ENCODE measurements at regions of chr14 and their contacts with region 1.

Region 1: GRCh38 chr14:100645192-100645990 is 58.2 kb upstream of the BEGAIN start:
- DNase-seq: peak; percentile 93
- H3K4me3 ChIP-seq: no peak overlapping the region
- H3K27ac ChIP-seq: no peak overlapping the region
- H3K4me1 ChIP-seq: no peaks in the 10 kb centered on the region
- H3K27me3 ChIP-seq: no peaks in the 10 kb centered on the region
- CTCF ChIP-seq: peak; percentile 85

Region 2: GRCh38 chr14:100140452-100141078 is 504.8 kb before region 1 on chr14:
- CTCF ChIA-PET with region 1: no interaction called
- POLR2A ChIA-PET with region 1: no interaction called
- intact Hi-C with region 1: no loop called
- DNase-seq: no peak
- H3K4me3 ChIP-seq: no peak overlapping the region
- H3K27ac ChIP-seq: no peak overlapping the region
- H3K4me1 ChIP-seq: no peaks in the 10 kb centered on the region
- H3K27me3 ChIP-seq: no peaks in the 10 kb centered on the region
- CTCF ChIP-seq: no peak

Region 3: GRCh38 chr14:100417466-100417865 is 227.9 kb before region 1 on chr14:
- CTCF ChIA-PET with region 1: interaction called, 11 read pairs
- POLR2A ChIA-PET with region 1: no interaction called
- intact Hi-C with region 1: no loop called
- DNase-seq: peak; percentile 67
- H3K4me3 ChIP-seq: no peak overlapping the region
- H3K27ac ChIP-seq: no peak overlapping the region
- H3K4me1 ChIP-seq: peaks cover 16% of the 10 kb centered on the region
- H3K27me3 ChIP-seq: no peaks in the 10 kb centered on the region
- CTCF ChIP-seq: peak; percentile 54

Region 4: GRCh38 chr14:100440187-100440631 is 205.2 kb before region 1 on chr14:
- CTCF ChIA-PET with region 1: interaction called, 8 read pairs
- POLR2A ChIA-PET with region 1: no interaction called
- intact Hi-C with region 1: loop called (anchors 1 kb)
- DNase-seq: peak; percentile 62
- H3K4me3 ChIP-seq: no peak overlapping the region
- H3K27ac ChIP-seq: no peak overlapping the region
- H3K4me1 ChIP-seq: peaks cover 28% of the 10 kb centered on the region
- H3K27me3 ChIP-seq: no peaks in the 10 kb centered on the region
- CTCF ChIP-seq: peak; percentile 68

Region 5: GRCh38 chr14:100524933-100525243 is 120.5 kb before region 1 on chr14:
- CTCF ChIA-PET with region 1: interaction called, 11 read pairs
- POLR2A ChIA-PET with region 1: no interaction called
- intact Hi-C with region 1: loop called (anchors 2 kb)
- DNase-seq: peak; percentile 47
- H3K4me3 ChIP-seq: no peak overlapping the region
- H3K27ac ChIP-seq: no peak overlapping the region
- H3K4me1 ChIP-seq: peaks cover 4% of the 10 kb centered on the region
- H3K27me3 ChIP-seq: no peaks in the 10 kb centered on the region
- CTCF ChIP-seq: peak; percentile 73